ENCODE measurements at regions of chr11 and their contacts with region 1.

Region 1: GRCh38 chr11:128522055-128522942 is 65.1 kb downstream of the ETS1 start:
- DNase-seq: peak; percentile 88
- ATAC-seq: peak; percentile 89
- H3K4me3 Mint-ChIP-seq: peak overlapping the region; percentile 99
- H3K27ac Mint-ChIP-seq: peak overlapping the region; percentile 97
- H3K4me1 Mint-ChIP-seq: peaks cover 56% of the 10 kb centered on the region
- H3K27me3 Mint-ChIP-seq: no peaks in the 10 kb centered on the region
- CTCF ChIP-seq: no peak

Region 2: GRCh38 chr11:128297091-128297651 is 225.1 kb before region 1 on chr11:
- CTCF ChIA-PET with region 1: interaction called, 22 read pairs
- POLR2A ChIA-PET with region 1: interaction called, 90 read pairs
- intact Hi-C with region 1: no loop called
- DNase-seq: no peak
- ATAC-seq: no peak
- H3K4me3 Mint-ChIP-seq: no peak overlapping the region
- H3K27ac Mint-ChIP-seq: peak overlapping the region; percentile 43
- H3K4me1 Mint-ChIP-seq: peaks cover 87% of the 10 kb centered on the region
- H3K27me3 Mint-ChIP-seq: no peaks in the 10 kb centered on the region
- CTCF ChIP-seq: no peak

Region 3: DNA sequence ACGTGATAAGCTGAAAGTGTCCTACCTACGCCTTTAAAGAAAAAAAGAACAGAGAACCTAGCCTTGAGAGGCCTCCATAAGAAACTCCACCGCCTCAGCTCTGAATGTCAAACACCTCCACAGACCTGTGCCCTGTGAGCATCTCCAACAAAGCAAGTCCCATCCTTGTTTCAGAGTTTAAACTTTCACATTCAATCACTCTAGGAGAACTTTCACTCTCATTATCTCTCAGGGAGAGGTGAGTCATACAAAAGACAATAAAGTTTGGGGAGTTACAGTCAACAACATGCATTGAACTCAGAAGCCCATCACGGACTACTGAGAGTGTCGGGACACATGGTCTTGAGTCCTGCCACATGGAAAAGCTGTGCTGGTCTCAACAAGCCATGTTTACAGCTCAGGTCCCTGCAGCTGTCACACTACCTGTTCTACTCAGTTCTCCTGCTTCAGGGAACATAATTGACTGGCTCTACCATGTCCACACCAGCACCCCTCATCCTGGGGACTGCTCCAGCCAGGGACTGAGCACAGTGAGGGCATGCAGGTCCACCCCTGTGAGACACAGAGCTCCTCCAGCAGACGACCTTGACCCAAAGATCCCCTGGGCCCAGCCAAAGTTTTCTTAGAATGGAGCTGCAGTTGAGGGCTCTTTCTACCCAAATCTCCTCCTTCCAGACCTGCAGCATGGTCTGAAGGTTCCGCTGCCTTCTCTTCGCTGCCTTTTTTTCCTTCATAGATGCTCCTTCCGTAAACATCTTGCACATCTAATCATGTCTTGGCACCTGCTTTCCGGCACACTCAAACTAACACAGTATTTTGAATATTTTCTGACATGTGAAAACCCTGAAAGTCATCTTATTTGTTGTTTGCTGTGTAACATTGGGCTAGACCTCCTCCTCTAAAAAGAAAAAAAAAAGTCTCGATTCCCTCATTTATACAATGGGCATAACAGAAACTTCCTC is 49.9 kb before region 1 on chr11:
- CTCF ChIA-PET with region 1: interaction called, 6 read pairs
- POLR2A ChIA-PET with region 1: interaction called, 221 read pairs
- intact Hi-C with region 1: loop called (anchors 1 kb)
- DNase-seq: no peak
- ATAC-seq: peak; percentile 26
- H3K4me3 Mint-ChIP-seq: peak overlapping the region; percentile 60
- H3K27ac Mint-ChIP-seq: peak overlapping the region; percentile 89
- H3K4me1 Mint-ChIP-seq: peaks cover 100% of the 10 kb centered on the region
- H3K27me3 Mint-ChIP-seq: no peaks in the 10 kb centered on the region
- CTCF ChIP-seq: no peak

Region 4: DNA sequence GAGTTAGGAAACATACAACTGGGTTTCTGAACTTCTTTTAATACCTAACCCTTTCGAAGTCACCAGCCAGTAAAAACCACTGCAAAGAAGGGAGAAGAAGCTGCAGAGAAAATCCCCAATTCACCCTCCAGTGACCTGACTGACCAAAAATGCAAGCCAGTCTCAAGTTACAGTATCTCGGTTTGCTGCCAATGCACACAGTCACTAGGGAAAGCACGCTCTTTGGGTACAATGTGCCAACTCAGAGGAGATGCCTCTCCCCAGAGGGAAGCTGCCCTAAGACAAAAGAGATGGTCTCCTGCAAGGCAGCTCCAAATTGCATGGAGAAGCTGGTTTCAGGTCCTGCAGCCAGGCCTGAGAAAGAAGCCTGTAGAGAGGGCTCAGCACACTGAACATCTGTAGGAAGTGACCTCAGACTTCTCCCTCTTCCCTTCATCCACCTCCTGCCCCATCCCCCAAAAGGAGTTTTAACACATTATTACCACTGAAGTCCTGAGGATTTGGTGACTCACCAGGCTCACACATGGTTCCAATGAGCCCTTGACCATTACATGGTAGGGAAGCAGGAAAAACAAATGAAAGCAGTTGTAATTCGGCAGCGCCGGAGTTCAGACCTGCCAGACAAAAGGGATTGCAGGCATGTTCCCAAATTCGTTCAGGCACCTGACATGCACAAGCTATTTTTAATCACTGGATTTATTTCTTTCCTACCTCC is 25.1 kb before region 1 on chr11:
- CTCF ChIA-PET with region 1: interaction called, 5 read pairs
- POLR2A ChIA-PET with region 1: interaction called, 61 read pairs
- intact Hi-C with region 1: loop called (anchors 1 kb)
- DNase-seq: peak; percentile 43
- ATAC-seq: peak; percentile 92
- H3K4me3 Mint-ChIP-seq: peak overlapping the region; percentile 78
- H3K27ac Mint-ChIP-seq: peak overlapping the region; percentile 93
- H3K4me1 Mint-ChIP-seq: peaks cover 98% of the 10 kb centered on the region
- H3K27me3 Mint-ChIP-seq: no peaks in the 10 kb centered on the region
- CTCF ChIP-seq: no peak

Region 5: GRCh38 chr11:128565881-128566280 is 43.6 kb after region 1 on chr11:
- CTCF ChIA-PET with region 1: interaction called, 3 read pairs
- POLR2A ChIA-PET with region 1: interaction called, 29 read pairs
- intact Hi-C with region 1: loop called (anchors 1 kb)
- DNase-seq: no peak
- ATAC-seq: no peak
- H3K4me3 Mint-ChIP-seq: no peak overlapping the region
- H3K27ac Mint-ChIP-seq: peak overlapping the region; percentile 68
- H3K4me1 Mint-ChIP-seq: peaks cover 76% of the 10 kb centered on the region
- H3K27me3 Mint-ChIP-seq: no peaks in the 10 kb centered on the region
- CTCF ChIP-seq: no peak

Region 6: GRCh38 chr11:128624269-128625175 is 102.2 kb after region 1 on chr11:
- CTCF ChIA-PET with region 1: interaction called, 33 read pairs
- POLR2A ChIA-PET with region 1: interaction called, 283 read pairs
- intact Hi-C with region 1: loop called (anchors 1 kb)
- DNase-seq: peak; percentile 64
- ATAC-seq: peak; percentile 82
- H3K4me3 Mint-ChIP-seq: peak overlapping the region; percentile 74
- H3K27ac Mint-ChIP-seq: peak overlapping the region; percentile 99
- H3K4me1 Mint-ChIP-seq: peaks cover 99% of the 10 kb centered on the region
- H3K27me3 Mint-ChIP-seq: no peaks in the 10 kb centered on the region
- CTCF ChIP-seq: no peak

Region 7: DNA sequence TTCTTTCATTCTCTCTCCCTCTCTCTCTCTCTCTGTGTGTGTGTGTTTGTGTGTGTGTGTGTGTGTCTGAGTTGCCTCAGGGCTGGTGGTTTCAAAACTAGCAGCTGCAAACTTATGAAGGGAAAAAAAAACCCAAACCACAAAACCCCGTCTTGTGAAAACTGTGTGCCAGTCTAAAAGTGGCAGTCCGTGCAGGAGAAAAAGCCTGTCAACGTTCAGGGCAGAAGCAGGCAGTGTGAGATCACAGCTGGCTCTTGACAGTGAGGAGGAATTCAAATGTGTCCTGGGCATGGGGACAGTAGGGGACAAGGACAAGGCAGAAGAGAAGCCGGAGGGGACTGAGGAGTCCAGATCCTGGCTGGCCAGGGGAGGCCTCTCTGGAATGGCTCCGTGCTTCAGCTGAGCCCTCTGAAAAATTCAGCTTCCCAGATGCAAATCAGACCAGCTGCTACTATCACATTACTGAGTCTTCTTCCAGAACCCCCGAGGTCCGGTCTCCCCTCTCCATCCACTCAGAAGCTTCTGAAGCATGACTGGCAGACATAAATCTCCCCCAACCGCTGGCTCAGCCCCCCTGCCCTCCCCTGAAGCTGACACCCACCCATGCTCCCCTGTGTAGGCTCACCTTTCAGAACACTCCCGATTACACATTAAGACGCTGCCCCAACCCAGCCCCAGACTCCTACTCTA is 203.5 kb after region 1 on chr11:
- CTCF ChIA-PET with region 1: no interaction called
- POLR2A ChIA-PET with region 1: no interaction called
- intact Hi-C with region 1: no loop called
- DNase-seq: peak; percentile 42
- ATAC-seq: peak; percentile 64
- H3K4me3 Mint-ChIP-seq: peak overlapping the region; percentile 83
- H3K27ac Mint-ChIP-seq: peak overlapping the region; percentile 98
- H3K4me1 Mint-ChIP-seq: peaks cover 98% of the 10 kb centered on the region
- H3K27me3 Mint-ChIP-seq: no peaks in the 10 kb centered on the region
- CTCF ChIP-seq: no peak

Measured in activated B cell treated with CpG ODN at 0.5 μM for 24 hours (primary cell).